ENCODE measurements at regions of chr6 and their contacts with region 1.

Region 1: GRCh38 chr6:119349323-119350042 is at the start of gene MAN1A1:
- DNase-seq: peak; percentile 98
- H3K4me3 Mint-ChIP-seq: peak within 1 kb of the TSS; percentile 97
- H3K27ac Mint-ChIP-seq: peak within 1 kb of the TSS; percentile 94
- H3K4me1 Mint-ChIP-seq: peaks cover 49% of the 10 kb centered on the region
- H3K27me3 Mint-ChIP-seq: no peaks in the 10 kb centered on the region
- total RNA-seq, gene MAN1A1: 43.0 and 43.7 TPM in 2 replicates

Region 2: GRCh38 chr6:118709859-118710350 is 639.6 kb before region 1 on chr6:
- intact Hi-C with region 1: loop called (anchors 10 kb)
- DNase-seq: peak; percentile 93
- H3K4me3 Mint-ChIP-seq: peak overlapping the region; percentile 90
- H3K27ac Mint-ChIP-seq: peak overlapping the region; percentile 92
- H3K4me1 Mint-ChIP-seq: peaks cover 65% of the 10 kb centered on the region
- H3K27me3 Mint-ChIP-seq: no peaks in the 10 kb centered on the region

Region 3: GRCh38 chr6:119078376-119079282 is 270.9 kb before region 1 on chr6 and contains the start of gene FAM184A:
- intact Hi-C with region 1: loop called (anchors 2 kb)
- DNase-seq: peak; percentile 94
- H3K4me3 Mint-ChIP-seq: peak within 1 kb of the TSS; percentile 93
- H3K27ac Mint-ChIP-seq: peak within 1 kb of the TSS; percentile 93
- H3K4me1 Mint-ChIP-seq: peaks cover 37% of the 10 kb centered on the region
- H3K27me3 Mint-ChIP-seq: peaks cover 6% of the 10 kb centered on the region
- total RNA-seq, gene FAM184A: 7.5 and 9.0 TPM in 2 replicates

Region 4: GRCh38 chr6:119261945-119262286 is 87.6 kb before region 1 on chr6:
- intact Hi-C with region 1: loop called (anchors 2 kb)
- DNase-seq: no peak
- H3K4me3 Mint-ChIP-seq: peak overlapping the region; percentile 36
- H3K27ac Mint-ChIP-seq: peak overlapping the region; percentile 91
- H3K4me1 Mint-ChIP-seq: peaks cover 27% of the 10 kb centered on the region
- H3K27me3 Mint-ChIP-seq: no peaks in the 10 kb centered on the region

Region 5: GRCh38 chr6:119446115-119446554 is 96.7 kb after region 1 on chr6:
- intact Hi-C with region 1: loop called (anchors 1 kb)
- DNase-seq: no peak
- H3K4me3 Mint-ChIP-seq: no peak overlapping the region
- H3K27ac Mint-ChIP-seq: peak overlapping the region; percentile 45
- H3K4me1 Mint-ChIP-seq: peaks cover 41% of the 10 kb centered on the region
- H3K27me3 Mint-ChIP-seq: no peaks in the 10 kb centered on the region

Region 6: GRCh38 chr6:119742188-119742803 is 392.8 kb after region 1 on chr6:
- intact Hi-C with region 1: loop called (anchors 5 kb)
- DNase-seq: peak; percentile 86
- H3K4me3 Mint-ChIP-seq: no peak overlapping the region
- H3K27ac Mint-ChIP-seq: no peak overlapping the region
- H3K4me1 Mint-ChIP-seq: no peaks in the 10 kb centered on the region
- H3K27me3 Mint-ChIP-seq: peaks cover 10% of the 10 kb centered on the region

Measured in activated CD4-positive, alpha-beta T cell treated with anti-CD3 and anti-CD28 coated beads, Interleukin-2, amount 10 ng/mL, durations not matched to agents 24 days and 14 days (primary cell).